ENCODE measurements at regions of chr2 and their contacts with region 1.

Region 1: GRCh38 chr2:37376421-37377186 is 32.2 kb downstream of the QPCT start:
- DNase-seq: peak; percentile 20
- H3K4me3 Mint-ChIP-seq: peak overlapping the region; percentile 24
- H3K27ac Mint-ChIP-seq: peak overlapping the region; percentile 73
- H3K4me1 Mint-ChIP-seq: peaks cover 29% of the 10 kb centered on the region
- H3K27me3 Mint-ChIP-seq: peaks cover 44% of the 10 kb centered on the region

Region 2: DNA sequence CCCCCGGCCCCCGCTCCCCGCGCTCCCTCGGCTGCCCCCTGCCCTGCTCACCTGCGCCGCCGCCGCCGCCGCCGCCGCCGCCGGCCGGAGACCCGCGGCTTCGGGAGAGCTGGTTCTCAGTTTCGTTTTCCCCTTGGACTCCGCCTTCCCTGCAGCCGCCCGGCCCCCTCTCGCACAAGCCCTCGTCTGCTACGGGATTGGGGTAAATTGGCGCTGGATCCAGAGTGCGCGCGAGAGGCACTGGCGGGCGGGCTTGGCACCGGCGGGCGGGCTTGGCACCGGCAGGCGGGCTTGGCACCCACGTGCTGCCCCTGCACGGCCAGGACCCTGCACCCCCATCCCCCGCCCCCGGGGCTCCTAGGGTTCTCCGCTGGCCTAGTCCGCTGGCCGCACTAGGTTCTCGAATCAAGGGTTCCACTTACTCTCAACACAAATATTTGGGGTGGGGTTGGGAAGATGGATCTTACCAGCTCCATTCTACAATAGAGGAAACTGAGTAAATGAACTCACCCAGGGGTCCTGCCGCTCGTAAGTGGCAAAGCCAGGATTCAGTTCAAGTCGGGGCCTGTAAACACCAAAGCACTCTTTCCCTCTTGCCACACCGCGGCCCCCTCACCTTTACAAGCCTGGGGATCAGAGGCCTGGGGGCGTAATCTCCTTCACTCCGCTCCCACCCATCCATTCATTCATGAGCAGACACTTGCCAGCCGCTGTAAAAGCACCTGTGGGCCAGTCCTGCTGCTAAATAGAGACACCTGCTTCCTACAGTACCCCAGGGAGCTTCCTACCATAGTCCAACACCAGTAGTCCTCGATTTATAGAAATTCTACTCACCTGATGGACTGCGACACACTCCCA is 219.5 kb before region 1 on chr2 and contains the start of gene EIF2AK2:
- intact Hi-C with region 1: loop called (anchors 5 kb)
- DNase-seq: peak; percentile 83
- H3K4me3 Mint-ChIP-seq: peak within 1 kb of the TSS; percentile 94
- H3K27ac Mint-ChIP-seq: peak within 1 kb of the TSS; percentile 92
- H3K4me1 Mint-ChIP-seq: peaks cover 33% of the 10 kb centered on the region
- H3K27me3 Mint-ChIP-seq: no peaks in the 10 kb centered on the region
- total RNA-seq, gene EIF2AK2: 30.6 and 30.8 TPM in 2 replicates

Region 3: GRCh38 chr2:37324786-37325624 is 51.6 kb before region 1 on chr2 and contains the start of gene PRKD3:
- intact Hi-C with region 1: loop called (anchors 2 kb)
- DNase-seq: peak; percentile 34
- H3K4me3 Mint-ChIP-seq: peak within 1 kb of the TSS; percentile 94
- H3K27ac Mint-ChIP-seq: peak within 1 kb of the TSS; percentile 90
- H3K4me1 Mint-ChIP-seq: peaks cover 33% of the 10 kb centered on the region
- H3K27me3 Mint-ChIP-seq: peaks cover 51% of the 10 kb centered on the region
- total RNA-seq, gene PRKD3: 11.9 and 14.0 TPM in 2 replicates

Region 4: DNA sequence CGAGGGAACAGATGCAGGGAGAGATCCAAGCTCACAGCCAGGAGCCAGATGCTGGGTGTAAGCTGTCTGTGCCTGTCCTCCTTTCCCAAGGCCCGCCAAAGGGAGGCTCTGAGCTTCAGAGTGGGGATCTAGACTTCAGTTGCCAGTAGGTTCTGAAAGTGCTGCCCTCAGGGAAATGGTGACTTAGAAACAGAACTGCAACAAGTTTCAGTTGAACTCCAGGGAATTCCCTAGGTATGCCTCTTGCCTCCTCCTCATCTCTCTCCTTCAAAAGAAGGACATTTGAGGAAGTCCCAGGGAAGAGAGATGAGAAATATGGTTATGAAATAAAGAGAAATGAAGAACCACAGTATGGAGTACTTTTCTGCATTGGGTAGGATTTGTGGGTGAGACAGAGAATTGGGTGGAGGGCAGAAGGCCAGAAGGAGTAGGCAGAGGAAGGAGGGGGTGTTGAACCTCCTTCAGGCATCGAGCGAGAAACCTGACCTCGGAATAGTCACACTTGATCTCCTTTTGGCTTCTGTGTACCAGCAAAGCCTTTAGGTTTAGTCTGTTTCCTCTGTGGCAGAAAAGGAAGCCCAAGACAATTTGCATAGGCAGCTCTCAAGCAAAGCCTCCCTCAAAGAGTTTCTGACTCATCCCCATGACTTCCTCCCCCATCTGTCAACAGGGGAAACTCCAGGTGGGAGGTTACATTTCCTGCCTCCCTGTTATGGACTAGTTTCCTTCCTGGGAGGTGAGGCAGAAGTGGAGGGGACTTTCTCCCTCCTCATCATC is 13.6 kb after region 1 on chr2:
- intact Hi-C with region 1: loop called (anchors 1 kb)
- DNase-seq: peak; percentile 59
- H3K4me3 Mint-ChIP-seq: peak overlapping the region; percentile 7
- H3K27ac Mint-ChIP-seq: peak overlapping the region; percentile 79
- H3K4me1 Mint-ChIP-seq: peaks cover 20% of the 10 kb centered on the region
- H3K27me3 Mint-ChIP-seq: peaks cover 10% of the 10 kb centered on the region

Region 5: DNA sequence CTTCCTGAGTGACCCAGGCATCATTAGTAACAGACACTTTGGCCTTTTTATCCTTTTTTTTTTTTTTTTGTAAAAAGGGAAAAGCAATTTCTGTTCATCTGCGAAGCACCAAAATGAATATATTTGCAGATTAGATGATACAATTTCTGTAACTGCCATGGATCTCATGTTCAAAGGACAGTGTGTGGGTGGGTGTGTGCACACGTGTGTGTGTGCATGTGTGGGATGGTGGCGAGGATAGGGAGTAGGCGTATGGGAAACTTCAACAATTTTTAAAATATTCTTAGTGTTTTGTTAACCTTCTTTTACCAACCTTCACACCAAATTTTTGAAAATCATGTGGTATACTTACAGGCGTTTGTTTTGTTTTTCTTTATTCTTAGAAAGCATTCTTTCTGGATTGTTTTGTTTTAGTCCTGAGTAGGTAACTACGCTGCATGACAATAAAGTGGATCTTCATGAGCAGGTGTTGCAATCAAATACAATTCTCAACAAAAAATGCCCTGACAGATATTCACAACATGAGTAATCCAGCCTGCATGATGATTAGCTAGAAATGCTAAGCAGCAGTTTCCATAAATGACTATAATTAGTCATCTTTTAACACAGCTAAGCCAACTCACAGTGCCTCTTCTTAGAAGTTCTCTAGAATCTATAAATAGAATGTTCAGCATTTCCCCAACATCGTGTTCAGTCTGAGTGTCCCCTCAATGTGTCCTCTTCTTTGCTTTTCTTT is 495.0 kb after region 1 on chr2:
- intact Hi-C with region 1: loop called (anchors 5 kb)
- DNase-seq: no peak
- H3K4me3 Mint-ChIP-seq: peak overlapping the region; percentile 10
- H3K27ac Mint-ChIP-seq: peak overlapping the region; percentile 86
- H3K4me1 Mint-ChIP-seq: peaks cover 34% of the 10 kb centered on the region
- H3K27me3 Mint-ChIP-seq: peaks cover 2% of the 10 kb centered on the region

Region 6: DNA sequence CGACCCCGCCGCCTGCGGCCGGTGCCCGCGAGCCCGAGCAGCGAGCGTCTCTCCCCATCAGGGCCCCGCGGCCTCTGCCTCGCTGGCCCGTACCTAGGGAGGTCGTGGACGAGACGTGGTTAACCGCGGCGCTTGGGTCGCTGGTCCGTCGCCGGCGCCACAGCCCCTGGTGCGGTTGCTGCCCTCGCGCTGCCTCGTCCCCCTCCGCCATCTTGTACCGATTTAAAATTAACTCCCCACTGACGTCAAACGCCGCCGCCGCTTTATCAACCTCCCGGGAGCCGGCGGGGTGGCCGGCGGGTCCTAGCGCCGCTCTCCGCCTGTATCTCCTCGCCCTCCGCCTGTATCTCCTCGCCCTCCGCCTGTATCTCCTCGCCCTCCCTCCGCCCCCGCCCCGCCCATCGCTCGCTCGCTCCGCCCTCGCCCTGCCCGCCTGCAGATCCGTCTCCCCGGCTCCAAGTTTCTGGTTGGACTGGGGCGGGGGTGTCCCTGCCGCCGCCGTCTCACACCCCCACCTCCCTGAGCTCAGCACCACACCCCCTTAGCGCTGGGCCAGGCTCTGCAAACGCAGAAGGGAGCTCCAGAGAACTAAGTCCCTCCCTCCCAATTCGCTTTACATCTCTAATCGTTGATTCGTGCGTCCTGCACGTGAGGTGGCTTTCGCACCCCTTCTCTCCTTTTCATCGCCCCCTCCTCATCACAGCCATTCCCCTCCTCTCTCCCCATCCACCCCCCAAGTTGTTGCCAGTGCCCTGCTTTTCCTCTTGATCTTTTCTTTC is 1000.6 kb after region 1 on chr2 and contains the start of gene ATL2:
- intact Hi-C with region 1: loop called (anchors 5 kb)
- DNase-seq: peak; percentile 94
- H3K4me3 Mint-ChIP-seq: peak within 1 kb of the TSS; percentile 87
- H3K27ac Mint-ChIP-seq: peak within 1 kb of the TSS; percentile 92
- H3K4me1 Mint-ChIP-seq: peaks cover 56% of the 10 kb centered on the region
- H3K27me3 Mint-ChIP-seq: no peaks in the 10 kb centered on the region
- total RNA-seq, gene ATL2: 57.1 and 57.7 TPM in 2 replicates